Activated CD8-positive, alpha-beta T cell treated with anti-CD3 and anti-CD28 coated beads, Interleukin-2, amount 10 ng/mL, durations not matched to agents 7 days and 5 days (primary cell): ENCODE measurements at regions of chr2 and their contacts with region 1.

Region 1: GRCh38 chr2:24046930-24047702 is at the start of gene WDCP:
- DNase-seq: peak; percentile 98
- ATAC-seq: peak; percentile 99
- H3K4me3 Mint-ChIP-seq: peak within 1 kb of the TSS; percentile 90
- H3K27ac Mint-ChIP-seq: peak within 1 kb of the TSS; percentile 88
- H3K4me1 Mint-ChIP-seq: peaks cover 37% of the 10 kb centered on the region
- H3K27me3 Mint-ChIP-seq: peaks cover 5% of the 10 kb centered on the region
- total RNA-seq, gene WDCP: 23.2 to 24.1 TPM

Region 2: DNA sequence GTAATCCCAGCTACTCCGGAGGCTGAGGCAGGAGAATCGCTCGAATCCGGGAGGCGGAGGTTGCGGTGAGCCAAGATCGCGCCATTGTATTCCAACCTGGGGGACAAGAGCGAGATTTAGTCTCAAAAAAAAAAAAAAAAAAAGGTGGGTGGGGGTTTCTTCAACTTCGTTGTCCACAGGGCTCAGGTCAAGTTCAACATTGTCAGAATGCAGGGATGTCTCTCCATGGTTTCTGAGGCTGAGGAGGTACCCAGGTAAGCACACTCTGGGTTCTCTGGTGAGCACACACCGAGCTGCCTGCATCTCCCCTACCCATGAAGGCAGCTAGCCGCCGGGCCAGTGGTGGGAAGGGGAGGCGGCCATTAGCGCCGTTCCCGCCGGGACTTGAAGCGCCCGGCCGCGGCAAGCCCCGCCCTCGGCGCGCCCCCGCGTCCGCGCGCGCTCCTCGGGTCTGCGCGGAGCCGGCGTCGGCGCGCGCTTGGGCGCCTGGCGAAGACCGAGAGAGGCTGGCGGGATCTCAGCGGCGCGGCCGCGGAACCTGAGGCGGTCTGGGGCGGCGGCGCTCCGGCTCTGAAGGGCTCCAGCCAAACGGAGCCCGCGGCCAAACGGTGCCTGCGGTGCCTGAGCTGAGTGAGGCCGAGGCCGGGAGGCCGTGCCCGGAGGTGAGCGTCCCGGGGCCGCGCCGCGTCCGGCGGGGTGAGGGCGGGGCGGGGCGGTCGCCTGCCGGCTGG is 107.0 kb before region 1 on chr2 and contains the start of gene UBXN2A:
- CTCF ChIA-PET with region 1: no interaction called
- POLR2A ChIA-PET with region 1: interaction called, 10 read pairs
- DNase-seq: peak; percentile 77
- ATAC-seq: peak; percentile 87
- H3K4me3 Mint-ChIP-seq: peak within 1 kb of the TSS; percentile 86
- H3K27ac Mint-ChIP-seq: peak within 1 kb of the TSS; percentile 85
- H3K4me1 Mint-ChIP-seq: peaks cover 26% of the 10 kb centered on the region
- H3K27me3 Mint-ChIP-seq: peaks cover 9% of the 10 kb centered on the region
- total RNA-seq, gene UBXN2A: 13.0 to 14.3 TPM

Region 3: GRCh38 chr2:24058564-24059271 is 11.6 kb after region 1 on chr2:
- CTCF ChIA-PET with region 1: interaction called, 10 read pairs
- POLR2A ChIA-PET with region 1: no interaction called
- DNase-seq: no peak
- ATAC-seq: no peak
- H3K4me3 Mint-ChIP-seq: no peak overlapping the region
- H3K27ac Mint-ChIP-seq: no peak overlapping the region
- H3K4me1 Mint-ChIP-seq: peaks cover 5% of the 10 kb centered on the region
- H3K27me3 Mint-ChIP-seq: no peaks in the 10 kb centered on the region

Region 4: DNA sequence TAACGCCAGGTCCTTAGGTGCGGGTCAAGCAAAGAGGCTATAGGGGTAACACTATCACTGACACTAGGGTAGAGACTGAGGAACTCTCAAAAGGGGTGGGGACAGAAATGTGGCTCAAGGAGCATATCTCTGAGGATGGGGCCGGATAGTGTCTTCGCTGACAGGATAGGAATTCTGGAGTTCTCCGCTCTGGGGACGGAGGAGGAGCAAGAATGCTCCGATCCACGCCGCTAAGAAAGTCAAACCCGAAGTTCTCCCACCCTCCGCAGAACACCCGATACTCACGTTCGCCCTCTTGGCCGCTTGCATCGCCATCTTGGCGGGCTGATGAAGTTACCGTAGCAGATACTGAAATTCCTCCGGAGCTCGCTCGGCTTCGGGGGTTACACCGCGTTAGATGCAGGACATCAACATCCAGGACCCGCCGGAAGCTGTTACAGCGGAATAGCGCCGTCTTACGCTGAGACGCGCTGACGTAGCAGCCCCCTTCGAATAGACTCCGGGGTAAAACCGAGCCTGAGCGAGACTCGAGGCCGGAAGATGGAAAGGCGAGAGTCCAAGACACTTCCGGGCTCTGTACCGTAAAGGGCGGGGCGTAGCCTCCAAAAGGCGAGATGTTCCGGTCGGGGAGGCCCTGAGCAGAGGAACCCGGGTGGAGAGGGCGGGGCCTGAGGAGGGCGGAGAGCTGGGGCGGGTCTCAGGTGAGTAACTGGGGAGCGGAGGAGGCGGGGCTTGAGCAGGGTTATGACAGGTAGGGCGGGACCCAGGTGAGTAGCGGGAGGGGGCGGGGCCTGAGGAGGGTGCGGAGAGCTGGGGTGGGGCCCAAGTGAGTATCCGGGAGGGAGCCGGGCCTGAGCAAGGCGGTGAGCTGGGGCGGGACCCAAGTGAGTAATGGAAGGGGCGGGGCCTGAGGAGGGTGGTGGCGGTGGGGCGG is 29.1 kb after region 1 on chr2 and contains the start of gene SF3B6:
- CTCF ChIA-PET with region 1: interaction called, 3 read pairs
- POLR2A ChIA-PET with region 1: interaction called, 12 read pairs
- DNase-seq: peak; percentile 100
- ATAC-seq: peak; percentile 93
- H3K4me3 Mint-ChIP-seq: peak within 1 kb of the TSS; percentile 98
- H3K27ac Mint-ChIP-seq: peak within 1 kb of the TSS; percentile 98
- H3K4me1 Mint-ChIP-seq: peaks cover 40% of the 10 kb centered on the region
- H3K27me3 Mint-ChIP-seq: no peaks in the 10 kb centered on the region
- total RNA-seq, gene SF3B6: 94.6 to 96.2 TPM

Region 5: DNA sequence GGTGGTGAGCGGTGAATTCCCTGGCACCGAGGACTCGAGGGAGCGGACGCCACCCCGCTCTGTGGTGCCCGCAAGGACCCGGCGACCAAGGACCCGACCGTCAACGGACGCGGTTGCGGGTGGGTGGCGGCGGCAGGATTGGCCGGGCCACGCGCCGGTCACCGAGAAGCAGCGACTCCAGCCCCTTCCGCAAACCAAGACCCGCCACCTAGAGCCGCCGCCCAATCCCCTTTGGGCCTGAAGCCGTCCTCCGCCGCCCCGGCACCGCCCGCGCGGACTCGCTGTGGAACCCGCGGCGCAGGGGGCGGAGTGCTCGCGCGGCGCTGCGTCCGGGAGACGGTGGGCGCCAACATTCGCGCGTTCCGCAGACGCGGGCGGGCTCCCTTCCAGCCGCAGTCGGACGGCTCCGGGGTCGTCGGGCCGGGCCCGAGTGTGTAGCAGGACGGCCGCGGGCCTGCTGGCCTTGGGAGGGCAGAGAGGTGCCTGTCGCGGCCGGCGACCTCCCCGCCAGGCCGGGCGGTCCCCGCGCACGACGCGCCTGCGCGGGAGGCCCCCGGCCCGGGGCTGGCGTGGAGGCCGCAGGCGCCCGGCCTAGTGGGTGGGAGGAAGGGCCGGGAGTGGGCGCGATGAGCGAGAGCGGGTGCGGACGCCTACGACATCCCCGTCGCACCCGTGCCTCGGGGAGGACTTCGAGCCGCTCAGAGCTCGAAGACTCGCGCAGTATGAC is 76.2 kb after region 1 on chr2 and contains the starts of genes FAM228B and PFN4:
- CTCF ChIA-PET with region 1: no interaction called
- POLR2A ChIA-PET with region 1: no interaction called
- DNase-seq: peak; percentile 78
- ATAC-seq: peak; percentile 94
- H3K4me3 Mint-ChIP-seq: peak within 1 kb of the TSS; percentile 79
- H3K27ac Mint-ChIP-seq: peak within 1 kb of the TSS; percentile 66
- H3K4me1 Mint-ChIP-seq: peaks cover 14% of the 10 kb centered on the region
- H3K27me3 Mint-ChIP-seq: no peaks in the 10 kb centered on the region
- total RNA-seq, gene FAM228B: 6.2 to 6.9 TPM
- total RNA-seq, gene PFN4: 0.26 TPM in 1 of 2 experiments, not detected in the other